B cell (primary cell): ENCODE measurements at regions of chr19 and their contacts with region 1.

Region 1: DNA sequence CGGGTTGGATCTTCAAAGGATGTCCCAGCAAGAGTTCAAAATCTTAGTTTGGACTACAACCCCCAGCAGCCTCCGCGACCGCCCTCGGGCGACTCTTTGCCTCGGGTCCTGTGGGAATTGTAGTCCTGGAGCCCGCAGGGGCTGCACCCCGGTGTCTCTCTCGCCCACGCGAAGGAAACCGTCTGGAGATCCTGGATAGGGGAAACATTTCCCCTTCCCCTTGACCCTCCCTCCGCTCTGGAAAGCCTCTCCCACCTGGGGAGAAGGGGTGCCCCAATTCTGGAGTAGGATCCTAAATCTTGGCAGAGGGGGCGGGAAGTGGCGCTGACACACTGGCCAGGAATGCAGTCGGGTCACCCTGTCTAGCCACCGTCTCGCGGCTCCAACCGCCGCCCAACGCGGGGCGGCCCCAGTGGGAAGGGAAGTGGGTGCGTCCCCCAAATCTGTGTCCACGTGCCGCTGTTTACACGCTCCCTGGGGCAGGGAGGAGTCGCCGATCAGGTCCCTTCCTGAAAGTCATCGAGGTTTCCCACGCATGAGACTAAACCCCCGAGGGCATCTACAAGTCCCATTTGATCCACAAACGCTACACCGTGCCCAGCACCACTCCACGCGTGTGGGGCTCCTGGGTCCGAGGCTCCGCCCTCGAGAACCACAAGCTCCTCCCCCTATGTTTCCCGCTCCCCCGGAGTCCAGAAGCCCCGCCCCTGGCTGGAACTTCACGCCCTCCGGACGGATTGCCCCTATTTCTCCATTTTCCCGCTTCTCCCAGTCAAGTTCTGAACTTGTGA is 761 bp upstream of the PPP1R13L start:
- DNase-seq: peak; percentile 89
- ATAC-seq: peak; percentile 66
- H3K4me3 ChIP-seq: peak overlapping the region; percentile 72 to 97 (median 80)
- H3K4me3 Mint-ChIP-seq: peak overlapping the region; percentile 93
- H3K27ac ChIP-seq: peak overlapping the region; percentile 81 to 92
- H3K27ac Mint-ChIP-seq: peak overlapping the region; percentile 92
- H3K4me1 ChIP-seq: peaks cover 34 to 43% of the 10 kb centered on the region in 2 donors
- H3K4me1 Mint-ChIP-seq: peaks cover 46% of the 10 kb centered on the region
- H3K27me3 ChIP-seq: peaks cover 0 to 30% (median 17%) of the 10 kb centered on the region in 4 experiments
- H3K27me3 Mint-ChIP-seq: peaks cover 13% of the 10 kb centered on the region
- CTCF ChIP-seq: no peak

Region 2: GRCh38 chr19:45370410-45371204 is 35.0 kb before region 1 on chr19 and contains the start of gene ERCC2:
- CTCF ChIA-PET with region 1: interaction called, 6 read pairs
- POLR2A ChIA-PET with region 1: no interaction called
- intact Hi-C with region 1: loop called (anchors 1 kb)
- DNase-seq: peak; percentile 99
- ATAC-seq: peak; percentile 97
- H3K4me3 ChIP-seq: peak within 1 kb of the TSS; percentile 55 to 83 (median 75)
- H3K4me3 Mint-ChIP-seq: peak within 1 kb of the TSS; percentile 94
- H3K27ac ChIP-seq: peak within 1 kb of the TSS; percentile 69 to 85
- H3K27ac Mint-ChIP-seq: peak within 1 kb of the TSS; percentile 92
- H3K4me1 ChIP-seq: peaks cover 3 to 12% of the 10 kb centered on the region in 2 donors
- H3K4me1 Mint-ChIP-seq: peaks cover 12% of the 10 kb centered on the region
- H3K27me3 ChIP-seq: no peaks in the 10 kb centered on the region
- H3K27me3 Mint-ChIP-seq: no peaks in the 10 kb centered on the region
- CTCF ChIP-seq: no peak
- total RNA-seq, gene ERCC2: 26.5 and 27.6 TPM in 2 replicates

Region 3: GRCh38 chr19:45439569-45440254 is 34.1 kb after region 1 on chr19:
- CTCF ChIA-PET with region 1: interaction called, 12 read pairs
- POLR2A ChIA-PET with region 1: interaction called, 3 read pairs
- intact Hi-C with region 1: loop called (anchors 5 kb)
- DNase-seq: peak; percentile 95
- ATAC-seq: peak; percentile 42
- H3K4me3 ChIP-seq: peak overlapping the region in 4 of 5 experiments; percentile 21 to 80 (median 60)
- H3K4me3 Mint-ChIP-seq: peak overlapping the region; percentile 85
- H3K27ac ChIP-seq: peak overlapping the region; percentile 48 to 82
- H3K27ac Mint-ChIP-seq: peak overlapping the region; percentile 91
- H3K4me1 ChIP-seq: peaks cover 31 to 36% of the 10 kb centered on the region in 2 donors
- H3K4me1 Mint-ChIP-seq: peaks cover 31% of the 10 kb centered on the region
- H3K27me3 ChIP-seq: no peaks in the 10 kb centered on the region
- H3K27me3 Mint-ChIP-seq: no peaks in the 10 kb centered on the region
- CTCF ChIP-seq: peak; percentile 100

Region 4: GRCh38 chr19:45478454-45479238 is 73.0 kb after region 1 on chr19:
- CTCF ChIA-PET with region 1: interaction called, 66 read pairs
- POLR2A ChIA-PET with region 1: interaction called, 4 read pairs
- intact Hi-C with region 1: loop called (anchors 1 kb)
- DNase-seq: peak; percentile 95
- ATAC-seq: peak; percentile 83
- H3K4me3 ChIP-seq: peak overlapping the region; percentile 67 to 98 (median 79)
- H3K4me3 Mint-ChIP-seq: peak overlapping the region; percentile 74
- H3K27ac ChIP-seq: peak overlapping the region; percentile 99 to 100
- H3K27ac Mint-ChIP-seq: peak overlapping the region; percentile 98
- H3K4me1 ChIP-seq: peaks cover 7 to 16% of the 10 kb centered on the region in 2 donors
- H3K4me1 Mint-ChIP-seq: peaks cover 26% of the 10 kb centered on the region
- H3K27me3 ChIP-seq: peaks cover 0 to 6% (median 3%) of the 10 kb centered on the region in 4 experiments
- H3K27me3 Mint-ChIP-seq: peaks cover 10% of the 10 kb centered on the region
- CTCF ChIP-seq: peak; percentile 82

Region 5: DNA sequence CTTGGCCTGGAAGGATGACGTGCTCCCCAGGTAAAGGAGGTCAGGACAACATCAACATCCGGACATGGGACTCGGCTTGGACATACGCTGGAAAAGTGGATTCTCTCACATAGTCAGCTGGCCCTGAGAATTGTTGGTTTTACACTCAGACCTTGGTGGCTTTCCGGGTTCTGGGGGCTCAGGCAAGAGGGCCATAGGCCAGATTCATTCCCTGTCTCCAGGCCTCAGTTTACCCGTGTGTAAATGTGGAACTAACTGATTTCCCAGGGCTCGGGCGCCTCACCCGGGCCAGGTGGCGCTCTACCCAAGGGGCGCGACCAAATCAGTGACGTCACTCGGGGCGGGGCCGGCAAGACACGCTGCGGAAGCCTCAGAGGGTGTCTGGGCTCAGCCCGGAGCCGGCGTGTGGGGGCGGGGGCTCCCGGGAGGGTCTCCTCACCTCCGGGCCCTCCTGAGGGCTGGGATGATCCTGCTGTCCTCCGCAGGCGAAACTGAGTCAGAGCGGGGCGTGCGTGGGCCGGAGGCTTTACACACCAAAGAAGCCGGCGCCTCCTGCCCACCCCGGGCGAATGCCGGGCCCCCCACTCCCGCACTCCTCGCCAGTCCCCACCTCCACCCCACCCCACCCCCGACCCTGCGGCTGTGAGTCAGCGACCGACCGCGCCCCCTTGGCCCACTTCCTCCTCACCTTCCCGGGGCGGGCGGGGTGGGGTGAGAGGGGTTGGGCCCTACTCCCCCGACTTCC is 100.8 kb after region 1 on chr19:
- CTCF ChIA-PET with region 1: interaction called, 3 read pairs
- POLR2A ChIA-PET with region 1: no interaction called
- intact Hi-C with region 1: loop called (anchors 1 kb)
- DNase-seq: peak; percentile 98
- ATAC-seq: peak; percentile 74
- H3K4me3 ChIP-seq: peak overlapping the region; percentile 63 to 96 (median 84)
- H3K4me3 Mint-ChIP-seq: peak overlapping the region; percentile 94
- H3K27ac ChIP-seq: peak overlapping the region; percentile 83 to 87
- H3K27ac Mint-ChIP-seq: peak overlapping the region; percentile 94
- H3K4me1 ChIP-seq: peaks cover 26 to 43% of the 10 kb centered on the region in 2 donors
- H3K4me1 Mint-ChIP-seq: peaks cover 54% of the 10 kb centered on the region
- H3K27me3 ChIP-seq: no peaks in the 10 kb centered on the region
- H3K27me3 Mint-ChIP-seq: no peaks in the 10 kb centered on the region
- CTCF ChIP-seq: peak; percentile 63

Region 6: GRCh38 chr19:45567618-45568206 is 162.1 kb after region 1 on chr19:
- CTCF ChIA-PET with region 1: no interaction called
- POLR2A ChIA-PET with region 1: no interaction called
- intact Hi-C with region 1: no loop called
- DNase-seq: no peak
- ATAC-seq: no peak
- H3K4me3 ChIP-seq: no peak overlapping the region
- H3K4me3 Mint-ChIP-seq: no peak overlapping the region
- H3K27ac ChIP-seq: no peak overlapping the region
- H3K27ac Mint-ChIP-seq: no peak overlapping the region
- H3K4me1 ChIP-seq: peaks cover 0 to 27% of the 10 kb centered on the region in 2 donors
- H3K4me1 Mint-ChIP-seq: peaks cover 26% of the 10 kb centered on the region
- H3K27me3 ChIP-seq: no peaks in the 10 kb centered on the region
- H3K27me3 Mint-ChIP-seq: no peaks in the 10 kb centered on the region
- CTCF ChIP-seq: no peak

Region 7: DNA sequence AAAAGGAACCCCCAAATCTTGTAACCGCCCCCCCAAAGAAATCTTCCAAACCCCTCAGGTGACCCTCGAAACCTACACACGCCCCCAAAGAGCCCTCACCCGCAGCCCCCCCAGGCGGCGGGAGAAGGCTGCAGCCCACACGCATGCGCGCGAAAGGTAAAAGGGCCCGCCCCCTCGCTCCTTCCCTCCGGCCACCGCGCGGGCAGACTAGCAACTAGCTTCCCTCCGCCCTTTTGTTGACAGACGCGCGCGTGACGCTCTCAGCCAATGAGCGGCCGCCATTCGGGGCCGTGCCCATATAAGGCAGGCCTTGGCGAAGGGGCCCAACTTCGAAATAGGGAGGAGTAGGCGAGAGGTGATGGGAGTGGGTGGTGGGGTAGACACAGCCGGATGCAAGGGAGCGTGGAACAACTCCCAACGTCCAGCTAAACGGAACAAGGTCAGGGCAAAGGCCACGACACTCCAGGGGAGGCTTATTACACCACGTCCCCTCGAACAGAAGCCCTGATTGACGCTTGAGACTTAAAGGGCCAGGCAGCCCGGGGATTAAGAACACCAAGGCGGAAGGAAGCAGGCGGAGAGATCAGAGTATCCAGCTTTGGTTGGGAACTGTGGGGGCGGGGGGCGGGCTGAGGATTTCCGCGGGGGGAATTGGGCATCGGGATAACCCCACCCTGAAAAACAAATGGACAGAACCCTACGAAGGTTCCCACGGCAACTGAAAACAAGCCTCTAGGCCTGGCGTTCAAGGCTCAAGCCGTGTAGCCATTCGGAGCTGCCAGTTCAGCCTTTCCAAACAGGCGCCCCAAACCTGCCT is 311.7 kb after region 1 on chr19:
- CTCF ChIA-PET with region 1: no interaction called
- POLR2A ChIA-PET with region 1: no interaction called
- intact Hi-C with region 1: loop called (anchors 1 kb)
- DNase-seq: peak; percentile 97
- ATAC-seq: peak; percentile 95
- H3K4me3 ChIP-seq: peak overlapping the region; percentile 76 to 93 (median 82)
- H3K4me3 Mint-ChIP-seq: peak overlapping the region; percentile 91
- H3K27ac ChIP-seq: peak overlapping the region; percentile 76 to 94
- H3K27ac Mint-ChIP-seq: peak overlapping the region; percentile 97
- H3K4me1 ChIP-seq: peaks cover 18 to 25% of the 10 kb centered on the region in 2 donors
- H3K4me1 Mint-ChIP-seq: peaks cover 39% of the 10 kb centered on the region
- H3K27me3 ChIP-seq: no peaks in the 10 kb centered on the region
- H3K27me3 Mint-ChIP-seq: no peaks in the 10 kb centered on the region
- CTCF ChIP-seq: no peak

Region 8: DNA sequence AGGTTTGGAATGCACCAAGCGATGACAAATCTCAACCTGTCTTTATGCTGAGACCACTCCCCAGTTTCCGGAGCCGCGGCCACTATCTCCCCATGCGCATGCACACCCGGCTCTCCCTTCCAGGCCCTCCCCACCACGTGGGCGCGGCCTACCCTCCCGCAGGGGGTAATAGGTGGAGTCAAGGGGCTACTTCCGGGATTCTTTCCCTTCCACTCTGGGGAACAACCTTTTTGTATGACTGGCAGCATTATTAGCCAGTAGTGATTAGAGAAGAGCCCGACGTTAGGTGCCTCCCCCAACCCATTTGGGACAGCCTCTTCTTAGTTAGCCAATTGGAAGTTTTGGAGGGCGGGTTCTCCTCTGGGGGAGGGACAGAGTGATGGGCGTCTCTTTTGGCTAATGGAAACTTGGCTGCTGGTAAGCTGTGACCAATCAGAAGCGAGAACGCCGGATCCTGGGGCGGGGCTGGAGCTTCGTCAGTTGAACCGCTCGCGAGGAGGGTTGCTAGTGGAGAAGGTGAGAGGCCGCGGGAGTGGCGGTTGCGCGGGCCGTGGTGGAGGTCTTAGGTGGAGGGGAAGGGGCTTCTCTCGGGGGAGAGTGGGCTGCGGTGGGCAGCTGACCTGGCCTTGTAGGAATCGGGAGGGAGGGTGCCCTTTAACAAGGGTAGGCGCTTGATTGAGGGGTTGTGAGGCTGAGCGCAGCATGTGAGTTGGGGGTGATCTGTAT is 589.5 kb after region 1 on chr19 and contains the start of gene CCDC61:
- CTCF ChIA-PET with region 1: interaction called, 4 read pairs
- POLR2A ChIA-PET with region 1: no interaction called
- intact Hi-C with region 1: loop called (anchors 10 kb)
- DNase-seq: peak; percentile 99
- ATAC-seq: peak; percentile 93
- H3K4me3 ChIP-seq: peak within 1 kb of the TSS; percentile 71 to 92 (median 78)
- H3K4me3 Mint-ChIP-seq: peak within 1 kb of the TSS; percentile 58
- H3K27ac ChIP-seq: peak within 1 kb of the TSS; percentile 55 to 84
- H3K27ac Mint-ChIP-seq: no peak within 1 kb of the TSS
- H3K4me1 ChIP-seq: peaks cover 19 to 21% of the 10 kb centered on the region in 2 donors
- H3K4me1 Mint-ChIP-seq: peaks cover 27% of the 10 kb centered on the region
- H3K27me3 ChIP-seq: peaks cover 0 to 9% (median 5%) of the 10 kb centered on the region in 4 experiments
- H3K27me3 Mint-ChIP-seq: peaks cover 21% of the 10 kb centered on the region
- CTCF ChIP-seq: no peak
- total RNA-seq, gene CCDC61: 30.1 and 37.0 TPM in 2 replicates